ENCODE measurements at regions of chr3 and their contacts with region 1.

Region 1: GRCh38 chr3:47989981-47990440 is 26.2 kb downstream of the MAP4 start:
- DNase-seq: peak; percentile 72
- H3K4me3 ChIP-seq: no peak overlapping the region
- H3K27ac ChIP-seq: no peak overlapping the region
- H3K4me1 ChIP-seq: peaks cover 0 to 13% (median 0%) of the 10 kb centered on the region in 4 donors
- H3K27me3 ChIP-seq: no peaks in the 10 kb centered on the region
- CTCF ChIP-seq: peak; percentile 84 to 92 (median 85)
- EP300 ChIP-seq: no peak
- POLR2A ChIP-seq: no peak

Region 2: GRCh38 chr3:47715928-47716327 is 274.1 kb before region 1 on chr3:
- in situ Hi-C with region 1: no loop called
- intact Hi-C with region 1: no loop called
- DNase-seq: no peak
- H3K4me3 ChIP-seq: no peak overlapping the region
- H3K27ac ChIP-seq: no peak overlapping the region
- H3K4me1 ChIP-seq: no peaks in the 10 kb centered on the region
- H3K27me3 ChIP-seq: no peaks in the 10 kb centered on the region
- CTCF ChIP-seq: no peak
- EP300 ChIP-seq: no peak
- POLR2A ChIP-seq: no peak

Region 3: GRCh38 chr3:47824541-47825473 is 165.2 kb before region 1 on chr3:
- in situ Hi-C with region 1: loop called in 3 of 4 experiments (anchors 10 to 25 kb)
- intact Hi-C with region 1: no loop called
- DNase-seq: peak; percentile 82
- H3K4me3 ChIP-seq: peak overlapping the region; percentile 90 to 99 (median 96)
- H3K27ac ChIP-seq: peak overlapping the region; percentile 85 to 89 (median 88)
- H3K4me1 ChIP-seq: peaks cover 8 to 20% (median 20%) of the 10 kb centered on the region in 4 donors
- H3K27me3 ChIP-seq: no peaks in the 10 kb centered on the region
- CTCF ChIP-seq: peak; percentile 31 to 87 (median 73)
- EP300 ChIP-seq: no peak
- POLR2A ChIP-seq: peak; percentile 26

Region 4: GRCh38 chr3:47836986-47837385 is 153.0 kb before region 1 on chr3:
- in situ Hi-C with region 1: loop called (anchors 5 to 25 kb)
- intact Hi-C with region 1: no loop called
- DNase-seq: no peak
- H3K4me3 ChIP-seq: no peak overlapping the region
- H3K27ac ChIP-seq: no peak overlapping the region
- H3K4me1 ChIP-seq: no peaks in the 10 kb centered on the region
- H3K27me3 ChIP-seq: no peaks in the 10 kb centered on the region
- CTCF ChIP-seq: no peak
- EP300 ChIP-seq: no peak
- POLR2A ChIP-seq: no peak

Measured in transverse colon (tissue), 4 donors.